ENCODE measurements at regions of chr6 and their contacts with region 1.

Region 1: DNA sequence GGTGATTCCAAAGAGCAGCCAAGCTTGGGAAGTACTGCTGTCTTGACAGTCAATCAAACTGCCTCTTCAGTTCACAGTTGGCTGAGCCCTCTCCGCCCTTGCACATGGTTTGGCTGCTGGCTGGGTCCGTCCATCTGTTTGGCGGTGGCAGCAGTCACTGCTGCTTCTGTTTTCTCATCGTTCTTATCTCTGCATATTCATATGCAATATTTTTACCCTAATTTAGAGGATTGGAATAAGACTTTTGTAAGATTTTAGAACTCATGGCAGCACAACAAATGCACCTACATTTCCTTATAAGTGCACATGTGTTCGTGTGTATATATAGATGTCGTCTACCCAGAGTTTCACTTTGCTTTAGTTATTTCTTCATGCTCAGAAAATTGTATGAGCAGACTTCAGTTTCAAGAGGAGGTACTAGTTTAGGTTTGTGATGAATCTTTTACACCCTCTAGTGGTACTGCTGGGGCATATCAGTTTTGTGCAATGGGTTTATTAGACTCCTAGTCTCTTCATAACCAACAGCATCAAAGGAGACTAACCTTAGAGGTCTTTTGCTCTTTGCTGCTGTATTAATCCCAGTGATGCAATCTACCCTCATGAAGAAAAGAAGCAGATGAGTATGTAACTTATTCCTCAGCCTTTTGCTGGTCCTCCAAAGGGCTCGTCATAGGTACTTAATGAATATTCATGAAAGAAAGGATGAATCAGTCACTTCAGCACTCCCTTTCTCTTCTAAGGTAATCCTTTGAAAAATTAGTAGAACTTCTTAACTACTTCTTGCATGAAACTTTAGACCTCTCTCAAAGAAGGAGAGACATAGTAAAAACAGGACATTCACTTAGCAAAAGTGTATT is 44.3 kb downstream of the KHDC1L start:
- DNase-seq: peak; percentile 67
- H3K4me3 Mint-ChIP-seq: no peak overlapping the region
- H3K27ac Mint-ChIP-seq: no peak overlapping the region
- H3K4me1 Mint-ChIP-seq: peaks cover 3% of the 10 kb centered on the region
- H3K27me3 Mint-ChIP-seq: no peaks in the 10 kb centered on the region

Region 2: GRCh38 chr6:71533939-71534379 is 1647.0 kb before region 1 on chr6:
- intact Hi-C with region 1: loop called (anchors 10 kb)
- DNase-seq: no peak
- H3K4me3 Mint-ChIP-seq: no peak overlapping the region
- H3K27ac Mint-ChIP-seq: no peak overlapping the region
- H3K4me1 Mint-ChIP-seq: no peaks in the 10 kb centered on the region
- H3K27me3 Mint-ChIP-seq: no peaks in the 10 kb centered on the region

Region 3: GRCh38 chr6:72411872-72412708 is 768.9 kb before region 1 on chr6:
- intact Hi-C with region 1: loop called (anchors 1 kb)
- DNase-seq: peak; percentile 94
- H3K4me3 Mint-ChIP-seq: no peak overlapping the region
- H3K27ac Mint-ChIP-seq: no peak overlapping the region
- H3K4me1 Mint-ChIP-seq: no peaks in the 10 kb centered on the region
- H3K27me3 Mint-ChIP-seq: peaks cover 4% of the 10 kb centered on the region

Region 4: GRCh38 chr6:72616406-72617015 is 564.5 kb before region 1 on chr6:
- intact Hi-C with region 1: loop called (anchors 2 kb)
- DNase-seq: peak; percentile 64
- H3K4me3 Mint-ChIP-seq: no peak overlapping the region
- H3K27ac Mint-ChIP-seq: no peak overlapping the region
- H3K4me1 Mint-ChIP-seq: peaks cover 29% of the 10 kb centered on the region
- H3K27me3 Mint-ChIP-seq: no peaks in the 10 kb centered on the region

Region 5: DNA sequence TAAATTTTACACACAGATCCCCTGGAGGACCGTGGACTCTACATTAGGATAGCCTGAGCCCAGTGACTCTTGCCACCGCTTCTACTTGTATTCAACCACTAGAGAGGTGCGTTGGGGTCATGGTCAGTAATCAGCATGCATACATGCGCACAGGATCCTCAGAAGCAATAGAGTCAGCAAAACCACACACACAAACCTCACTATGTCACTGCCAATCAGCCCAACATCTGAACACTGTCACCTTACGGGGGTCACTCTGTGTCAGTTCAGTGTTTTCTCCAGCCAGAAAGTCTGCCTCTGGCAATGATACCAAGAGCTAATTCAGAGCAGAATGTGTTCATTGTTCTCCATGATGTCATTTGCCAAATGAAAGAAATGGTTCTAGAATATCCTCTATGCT is 181.0 kb before region 1 on chr6:
- intact Hi-C with region 1: no loop called
- DNase-seq: no peak
- H3K4me3 Mint-ChIP-seq: no peak overlapping the region
- H3K27ac Mint-ChIP-seq: no peak overlapping the region
- H3K4me1 Mint-ChIP-seq: no peaks in the 10 kb centered on the region
- H3K27me3 Mint-ChIP-seq: peaks cover 3% of the 10 kb centered on the region

Region 6: DNA sequence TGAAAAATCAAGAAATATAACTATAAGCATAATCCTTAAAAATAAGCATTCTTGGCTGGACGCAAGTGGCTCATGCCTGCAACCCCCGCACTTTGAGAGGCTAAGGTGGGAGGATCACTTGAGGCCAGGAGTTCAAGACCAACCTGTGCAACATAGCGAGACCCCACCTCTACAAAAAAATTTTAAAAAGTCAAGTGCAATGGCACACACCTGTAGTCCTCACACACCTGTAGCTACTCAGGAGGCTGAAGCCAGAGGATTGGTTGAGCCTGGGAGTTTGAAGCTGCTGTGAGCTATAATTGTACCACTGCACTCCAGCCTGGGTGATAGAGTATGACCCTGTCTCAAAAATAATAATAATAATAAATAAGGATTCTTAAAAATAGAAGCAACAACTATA is 64.7 kb before region 1 on chr6:
- intact Hi-C with region 1: no loop called
- DNase-seq: no peak
- H3K4me3 Mint-ChIP-seq: no peak overlapping the region
- H3K27ac Mint-ChIP-seq: no peak overlapping the region
- H3K4me1 Mint-ChIP-seq: no peaks in the 10 kb centered on the region
- H3K27me3 Mint-ChIP-seq: no peaks in the 10 kb centered on the region

Region 7: DNA sequence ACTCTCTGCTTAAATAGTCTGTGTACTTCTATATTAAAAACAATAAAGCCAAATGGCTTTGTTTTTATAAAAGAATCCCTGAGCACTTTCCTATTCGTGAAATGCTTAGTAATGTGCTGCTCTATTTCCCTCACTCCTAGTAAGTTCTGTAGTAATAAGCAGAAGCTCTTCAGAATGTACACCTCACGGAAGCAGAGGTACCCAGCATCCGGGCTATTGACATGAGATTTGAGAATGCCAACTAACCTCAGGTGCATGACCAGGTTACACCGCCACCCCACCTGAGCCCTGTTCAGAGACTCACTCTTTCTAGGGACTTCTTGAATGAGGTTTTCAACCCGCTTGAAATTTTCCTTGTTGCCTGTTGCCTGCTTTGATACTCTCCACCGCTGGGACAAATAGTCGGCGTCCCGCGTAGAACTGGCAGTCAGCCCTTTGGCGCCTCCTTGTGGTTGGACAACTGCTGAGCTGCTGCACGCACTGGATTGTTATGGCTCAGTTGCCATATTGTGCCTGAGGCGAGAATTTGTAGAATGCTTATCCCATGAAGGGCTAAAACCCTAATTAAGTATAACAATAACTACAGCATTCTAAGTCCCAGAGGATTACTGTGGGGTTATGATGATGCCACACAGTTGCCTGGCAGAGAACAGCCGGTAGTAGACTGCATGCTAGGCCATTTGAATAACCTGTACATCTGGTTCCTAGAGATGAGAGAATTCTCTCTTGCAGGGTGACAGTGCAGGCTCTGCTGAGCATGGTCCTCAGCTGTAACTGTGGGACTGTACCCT is 51.1 kb before region 1 on chr6:
- intact Hi-C with region 1: loop called (anchors 2 kb)
- DNase-seq: peak; percentile 95
- H3K4me3 Mint-ChIP-seq: peak overlapping the region; percentile 18
- H3K27ac Mint-ChIP-seq: no peak overlapping the region
- H3K4me1 Mint-ChIP-seq: peaks cover 4% of the 10 kb centered on the region
- H3K27me3 Mint-ChIP-seq: peaks cover 3% of the 10 kb centered on the region

Region 8: GRCh38 chr6:73236147-73236750 is 55.3 kb after region 1 on chr6:
- intact Hi-C with region 1: no loop called
- DNase-seq: no peak
- H3K4me3 Mint-ChIP-seq: no peak overlapping the region
- H3K27ac Mint-ChIP-seq: no peak overlapping the region
- H3K4me1 Mint-ChIP-seq: no peaks in the 10 kb centered on the region
- H3K27me3 Mint-ChIP-seq: no peaks in the 10 kb centered on the region

Region 9: GRCh38 chr6:73329201-73329600 is 148.2 kb after region 1 on chr6:
- intact Hi-C with region 1: loop called (anchors 1 kb)
- DNase-seq: no peak
- H3K4me3 Mint-ChIP-seq: no peak overlapping the region
- H3K27ac Mint-ChIP-seq: no peak overlapping the region
- H3K4me1 Mint-ChIP-seq: no peaks in the 10 kb centered on the region
- H3K27me3 Mint-ChIP-seq: peaks cover 36% of the 10 kb centered on the region

Measured in activated CD4-positive, alpha-beta T cell treated with anti-CD3 and anti-CD28 coated beads, Interleukin-2, amount 10 ng/mL, durations not matched to agents 24 days and 14 days (primary cell).